H1 (cell line): ENCODE measurements at regions of chr2 and their contacts with region 1.

Region 1: GRCh38 chr2:213152065-213152794 is 818 bp upstream of the IKZF2 start:
- DNase-seq: no peak
- H3K4me3 ChIP-seq: peak overlapping the region; percentile 63 to 97 (median 78)
- H3K27ac ChIP-seq: no peak overlapping the region
- H3K4me1 ChIP-seq: peaks cover 0 to 10% (median 2%) of the 10 kb centered on the region in 4 experiments; a peak in 2 of 7 replicates
- H3K27me3 ChIP-seq: no peaks in the 10 kb centered on the region
- CTCF ChIP-seq: peak in 2 of 3 experiments; percentile 2 to 11; a peak in 3 of 4 replicates
- EP300 ChIP-seq: no peak
- POLR2A ChIP-seq: no peak
- RAD21 ChIP-seq: peak; percentile 15 to 29; a peak in 2 of 4 replicates

Region 2: GRCh38 chr2:212863185-212863588 is 289.0 kb before region 1 on chr2:
- CTCF ChIA-PET with region 1: interaction called, 14 read pairs
- POLR2A ChIA-PET with region 1: no interaction called
- DNase-seq: peak; percentile 29 to 56
- H3K4me3 ChIP-seq: no peak overlapping the region; a peak in 1 of 8 replicates
- H3K27ac ChIP-seq: no peak overlapping the region
- H3K4me1 ChIP-seq: no peaks in the 10 kb centered on the region
- H3K27me3 ChIP-seq: no peaks in the 10 kb centered on the region
- CTCF ChIP-seq: peak; percentile 38 to 84 (median 82)
- EP300 ChIP-seq: no peak
- POLR2A ChIP-seq: no peak
- RAD21 ChIP-seq: peak; percentile 97 to 98

Region 3: GRCh38 chr2:213187833-213188532 is 35.8 kb after region 1 on chr2:
- CTCF ChIA-PET with region 1: interaction called, 10 read pairs
- POLR2A ChIA-PET with region 1: interaction called, 4 read pairs
- DNase-seq: peak; percentile 57 to 69
- H3K4me3 ChIP-seq: peak overlapping the region in 2 of 4 experiments; percentile 17 to 50; a peak in 3 of 8 replicates
- H3K27ac ChIP-seq: peak overlapping the region; percentile 73
- H3K4me1 ChIP-seq: peaks cover 3 to 23% (median 10%) of the 10 kb centered on the region in 4 experiments; a peak in 6 of 7 replicates
- H3K27me3 ChIP-seq: no peaks in the 10 kb centered on the region
- CTCF ChIP-seq: no peak
- EP300 ChIP-seq: peak in 1 of 2 experiments; percentile 83; a peak in 1 of 3 replicates
- POLR2A ChIP-seq: no peak
- RAD21 ChIP-seq: no peak

Region 4: GRCh38 chr2:213336253-213336770 is 184.1 kb after region 1 on chr2:
- CTCF ChIA-PET with region 1: no interaction called
- POLR2A ChIA-PET with region 1: no interaction called
- DNase-seq: no peak
- H3K4me3 ChIP-seq: no peak overlapping the region
- H3K27ac ChIP-seq: no peak overlapping the region
- H3K4me1 ChIP-seq: no peaks in the 10 kb centered on the region
- H3K27me3 ChIP-seq: no peaks in the 10 kb centered on the region
- CTCF ChIP-seq: no peak
- EP300 ChIP-seq: no peak
- POLR2A ChIP-seq: no peak
- RAD21 ChIP-seq: no peak